ENCODE measurements at regions of chr21 and their contacts with region 1.

Region 1: GRCh38 chr21:27700974-27701614 is 734.2 kb upstream of the ADAMTS5 start:
- DNase-seq: peak; percentile 49 to 79
- H3K4me3 ChIP-seq: no peak overlapping the region
- H3K27ac ChIP-seq: no peak overlapping the region
- H3K4me1 ChIP-seq: no peaks in the 10 kb centered on the region
- H3K27me3 ChIP-seq: no peaks in the 10 kb centered on the region
- CTCF ChIP-seq: peak; percentile 78 to 96 (median 83)
- EP300 ChIP-seq: no peak
- POLR2A ChIP-seq: no peak
- RAD21 ChIP-seq: peak; percentile 95 to 96

Region 2: GRCh38 chr21:26850108-26850643 is 850.9 kb before region 1 on chr21:
- CTCF ChIA-PET with region 1: interaction called, 36 read pairs
- POLR2A ChIA-PET with region 1: interaction called, 3 read pairs
- DNase-seq: no peak
- H3K4me3 ChIP-seq: no peak overlapping the region
- H3K27ac ChIP-seq: no peak overlapping the region
- H3K4me1 ChIP-seq: peaks cover 0 to 14% (median 4%) of the 10 kb centered on the region in 4 experiments; a peak in 5 of 7 replicates
- H3K27me3 ChIP-seq: peaks cover 0 to 16% (median 6%) of the 10 kb centered on the region in 4 experiments; a peak in 4 of 7 replicates
- CTCF ChIP-seq: peak in 2 of 3 experiments; percentile 20 to 61; a peak in 2 of 4 replicates
- EP300 ChIP-seq: no peak
- POLR2A ChIP-seq: no peak
- RAD21 ChIP-seq: peak; percentile 62 to 65